ENCODE measurements at regions of chr15 and their contacts with region 1.

Region 1: DNA sequence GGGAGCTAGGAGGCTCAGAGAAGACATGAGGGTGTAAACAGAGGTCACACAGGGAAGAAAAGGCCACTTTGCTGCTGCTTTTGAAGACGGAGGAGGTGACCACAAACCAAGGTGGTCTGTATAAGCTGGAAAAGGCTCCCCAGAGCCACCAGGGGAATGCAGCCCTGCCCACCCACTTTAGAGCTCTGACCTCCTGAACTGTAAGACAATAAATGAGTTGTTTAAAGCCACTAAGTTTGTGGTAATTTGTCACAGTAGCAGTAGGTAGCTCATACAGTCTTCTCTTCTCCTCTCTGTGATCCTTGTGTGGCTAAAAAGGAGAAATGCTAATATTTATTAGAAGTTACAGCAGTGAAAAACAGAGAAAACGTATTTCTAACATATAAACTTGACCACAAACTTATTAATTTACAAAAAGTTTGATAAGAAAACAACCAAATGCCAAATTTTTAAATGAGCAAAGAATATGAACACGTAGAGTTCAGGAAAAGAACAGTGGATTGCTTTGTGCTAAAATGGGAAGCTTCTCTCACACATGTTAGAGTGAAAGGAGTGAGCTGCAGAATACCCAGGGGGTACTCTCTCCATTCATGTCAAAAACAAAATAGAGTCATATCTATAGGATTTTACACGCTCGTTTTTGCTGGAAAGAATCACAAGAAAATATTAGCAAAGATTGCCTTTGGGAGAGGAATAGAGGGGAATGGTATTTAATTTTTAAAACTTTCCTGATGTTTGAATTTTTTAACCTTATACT is 71.0 kb downstream of the NOX5 start:
- DNase-seq: no peak
- H3K4me3 ChIP-seq: no peak overlapping the region
- H3K27ac ChIP-seq: no peak overlapping the region
- H3K4me1 ChIP-seq: peaks cover 91% of the 10 kb centered on the region
- H3K27me3 ChIP-seq: no peaks in the 10 kb centered on the region
- CTCF ChIP-seq: no peak

Region 2: DNA sequence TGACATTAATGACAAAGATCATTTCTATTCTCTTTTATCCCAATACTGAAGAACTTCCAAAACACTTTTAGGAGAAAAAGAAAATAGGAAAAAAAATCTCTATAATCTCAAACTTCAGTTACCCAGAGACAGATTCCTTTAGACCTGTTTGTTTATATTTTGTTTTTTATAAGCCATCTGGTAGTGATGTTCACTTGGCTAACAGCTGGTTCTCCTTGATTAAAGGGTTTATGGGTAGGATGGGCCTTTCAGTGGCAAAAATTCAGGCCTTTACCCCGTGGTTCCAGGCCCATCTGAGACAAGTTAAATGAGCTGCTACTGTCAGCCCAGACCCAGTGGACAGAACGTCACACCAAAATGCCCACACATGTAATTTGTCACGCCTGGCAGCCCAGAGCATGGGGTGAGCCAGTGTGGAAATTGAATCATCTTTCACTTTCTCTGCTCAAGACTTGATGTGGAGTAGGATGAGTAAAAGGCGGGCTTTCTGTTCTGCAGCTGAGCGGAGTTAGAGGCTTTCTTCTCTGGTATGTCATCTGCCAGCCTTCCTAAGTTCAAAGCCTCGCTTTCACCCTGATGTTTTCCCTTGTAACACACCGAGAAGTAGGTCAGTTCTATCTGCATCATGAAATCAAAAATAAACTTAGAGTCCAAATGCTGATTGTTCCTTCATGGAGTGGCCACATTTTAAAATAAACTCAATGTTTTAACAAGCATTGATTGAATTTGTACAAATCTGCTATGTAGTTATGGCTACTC is 1322.7 kb before region 1 on chr15:
- CTCF ChIA-PET with region 1: no interaction called
- POLR2A ChIA-PET with region 1: interaction called, 11 read pairs
- intact Hi-C with region 1: no loop called
- DNase-seq: no peak
- H3K4me3 ChIP-seq: no peak overlapping the region
- H3K27ac ChIP-seq: no peak overlapping the region
- H3K4me1 ChIP-seq: no peaks in the 10 kb centered on the region
- H3K27me3 ChIP-seq: no peaks in the 10 kb centered on the region
- CTCF ChIP-seq: no peak

Region 3: DNA sequence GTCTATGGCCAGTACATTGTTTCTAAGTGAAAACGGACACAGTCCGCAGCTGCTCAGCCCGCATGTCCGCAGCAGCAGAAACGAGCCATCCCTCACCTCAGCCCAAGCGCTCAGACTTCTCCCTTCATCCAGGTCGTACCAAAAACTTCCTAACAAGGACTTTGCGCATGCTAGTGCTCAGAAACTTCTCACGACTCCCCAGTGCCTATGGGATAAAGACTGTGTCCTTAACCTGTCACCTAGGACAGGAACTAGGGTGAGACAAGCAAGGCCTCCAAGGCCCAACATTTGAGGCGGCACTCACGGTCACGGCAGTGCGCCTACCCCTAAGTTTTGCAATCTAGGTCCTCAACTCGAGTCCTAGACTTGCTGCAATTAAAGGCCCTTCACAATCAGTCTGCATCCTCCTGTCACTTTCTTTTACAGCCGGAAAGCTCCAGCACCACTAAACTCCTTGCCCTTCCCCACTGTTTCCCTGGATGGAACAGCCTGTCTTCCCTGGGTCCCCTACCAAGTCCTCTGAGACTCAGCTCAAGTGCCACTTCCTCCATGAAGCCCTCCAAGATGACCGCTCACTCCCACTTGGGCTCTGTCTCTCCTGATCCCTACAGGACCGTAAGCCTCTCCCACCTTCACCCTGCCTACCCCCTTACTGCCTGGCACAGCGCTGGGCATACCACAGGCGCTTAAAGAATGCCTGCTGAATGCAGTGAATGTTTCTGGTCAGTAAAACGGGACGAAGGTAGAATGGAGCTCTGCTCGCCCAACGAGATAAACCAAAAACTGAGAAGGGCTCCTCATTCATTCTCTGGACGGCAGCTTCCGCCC is 857.1 kb before region 1 on chr15:
- CTCF ChIA-PET with region 1: no interaction called
- POLR2A ChIA-PET with region 1: no interaction called
- intact Hi-C with region 1: no loop called
- DNase-seq: no peak
- H3K4me3 ChIP-seq: peak overlapping the region; percentile 90
- H3K27ac ChIP-seq: no peak overlapping the region
- H3K4me1 ChIP-seq: peaks cover 15% of the 10 kb centered on the region; the same call in 1 of the 2 replicates
- H3K27me3 ChIP-seq: no peaks in the 10 kb centered on the region
- CTCF ChIP-seq: no peak